ENCODE measurements at regions of chr1 and their contacts with region 1.

Region 1: GRCh38 chr1:204128964-204129896 is 22.6 kb downstream of the ETNK2 start:
- DNase-seq: peak; percentile 76
- ATAC-seq: peak; percentile 83
- H3K4me3 ChIP-seq: no peak overlapping the region
- H3K4me3 Mint-ChIP-seq: peak overlapping the region; percentile 34
- H3K27ac ChIP-seq: no peak overlapping the region
- H3K27ac Mint-ChIP-seq: no peak overlapping the region
- H3K4me1 ChIP-seq: peaks cover 7 to 8% of the 10 kb centered on the region in 2 donors
- H3K4me1 Mint-ChIP-seq: peaks cover 5% of the 10 kb centered on the region
- H3K27me3 ChIP-seq: peaks cover 0 to 12% (median 2%) of the 10 kb centered on the region in 4 experiments
- H3K27me3 Mint-ChIP-seq: peaks cover 14% of the 10 kb centered on the region
- CTCF ChIP-seq: peak; percentile 87

Region 2: DNA sequence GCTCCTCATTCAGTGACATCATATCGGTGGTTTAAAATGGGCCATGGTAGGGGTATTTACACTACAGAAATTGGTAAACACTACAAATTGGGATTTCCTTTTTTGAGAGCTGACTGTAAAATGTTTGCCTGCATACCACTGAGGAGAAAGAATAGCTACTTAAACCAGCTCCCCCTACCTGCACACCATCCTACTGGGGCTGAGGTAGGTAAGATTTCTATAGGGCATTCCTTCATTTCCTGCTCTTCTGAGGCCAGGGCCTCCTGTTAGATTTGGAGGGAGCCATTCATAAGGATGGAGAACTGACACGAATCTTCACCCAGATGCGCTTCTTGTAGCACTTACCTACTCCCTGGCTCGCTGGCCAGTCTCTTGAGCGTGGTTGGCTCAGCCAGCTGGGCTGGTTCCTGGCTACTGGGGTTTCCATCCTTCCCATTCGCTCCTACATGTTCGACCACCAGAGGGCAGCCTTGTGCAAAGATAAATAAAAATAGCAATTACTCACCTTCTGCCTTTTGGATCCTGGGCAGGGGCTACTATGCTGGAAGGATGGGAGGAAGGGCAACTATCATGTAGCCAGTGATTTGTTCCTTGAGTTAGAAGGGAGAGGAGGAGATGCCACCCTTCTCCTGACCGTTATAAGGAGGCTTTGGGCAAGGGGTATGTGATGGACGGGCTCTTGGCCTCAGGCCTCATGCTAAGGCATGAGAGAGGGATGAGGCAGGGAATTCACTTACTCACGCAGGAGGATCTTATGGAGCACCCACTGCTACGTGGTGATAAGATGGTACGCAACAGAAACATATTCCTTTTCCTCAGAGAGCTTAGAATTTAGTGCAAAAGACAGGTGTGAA is 624.6 kb before region 1 on chr1:
- CTCF ChIA-PET with region 1: interaction called, 5 read pairs
- POLR2A ChIA-PET with region 1: no interaction called
- intact Hi-C with region 1: loop called (anchors 5 kb)
- DNase-seq: peak; percentile 80
- ATAC-seq: peak; percentile 72
- H3K4me3 ChIP-seq: no peak overlapping the region
- H3K4me3 Mint-ChIP-seq: no peak overlapping the region
- H3K27ac ChIP-seq: no peak overlapping the region
- H3K27ac Mint-ChIP-seq: no peak overlapping the region
- H3K4me1 ChIP-seq: no peaks in the 10 kb centered on the region
- H3K4me1 Mint-ChIP-seq: peaks cover 2% of the 10 kb centered on the region
- H3K27me3 ChIP-seq: peaks cover 0 to 7% (median 0%) of the 10 kb centered on the region in 4 experiments
- H3K27me3 Mint-ChIP-seq: peaks cover 16% of the 10 kb centered on the region
- CTCF ChIP-seq: peak; percentile 93

Region 3: GRCh38 chr1:203871107-203871875 is 257.9 kb before region 1 on chr1:
- CTCF ChIA-PET with region 1: interaction called, 21 read pairs
- POLR2A ChIA-PET with region 1: no interaction called
- intact Hi-C with region 1: no loop called
- DNase-seq: peak; percentile 37
- ATAC-seq: no peak
- H3K4me3 ChIP-seq: no peak overlapping the region
- H3K4me3 Mint-ChIP-seq: no peak overlapping the region
- H3K27ac ChIP-seq: no peak overlapping the region
- H3K27ac Mint-ChIP-seq: no peak overlapping the region
- H3K4me1 ChIP-seq: no peaks in the 10 kb centered on the region
- H3K4me1 Mint-ChIP-seq: no peaks in the 10 kb centered on the region
- H3K27me3 ChIP-seq: no peaks in the 10 kb centered on the region
- H3K27me3 Mint-ChIP-seq: no peaks in the 10 kb centered on the region
- CTCF ChIP-seq: peak; percentile 61

Region 4: GRCh38 chr1:204018463-204018862 is 110.8 kb before region 1 on chr1:
- CTCF ChIA-PET with region 1: no interaction called
- POLR2A ChIA-PET with region 1: no interaction called
- intact Hi-C with region 1: no loop called
- DNase-seq: no peak
- ATAC-seq: no peak
- H3K4me3 ChIP-seq: no peak overlapping the region
- H3K4me3 Mint-ChIP-seq: no peak overlapping the region
- H3K27ac ChIP-seq: no peak overlapping the region
- H3K27ac Mint-ChIP-seq: no peak overlapping the region
- H3K4me1 ChIP-seq: no peaks in the 10 kb centered on the region
- H3K4me1 Mint-ChIP-seq: no peaks in the 10 kb centered on the region
- H3K27me3 ChIP-seq: peaks cover 0 to under 1% (median 0%) of the 10 kb centered on the region in 4 experiments
- H3K27me3 Mint-ChIP-seq: peaks cover 19% of the 10 kb centered on the region
- CTCF ChIP-seq: no peak

Region 5: DNA sequence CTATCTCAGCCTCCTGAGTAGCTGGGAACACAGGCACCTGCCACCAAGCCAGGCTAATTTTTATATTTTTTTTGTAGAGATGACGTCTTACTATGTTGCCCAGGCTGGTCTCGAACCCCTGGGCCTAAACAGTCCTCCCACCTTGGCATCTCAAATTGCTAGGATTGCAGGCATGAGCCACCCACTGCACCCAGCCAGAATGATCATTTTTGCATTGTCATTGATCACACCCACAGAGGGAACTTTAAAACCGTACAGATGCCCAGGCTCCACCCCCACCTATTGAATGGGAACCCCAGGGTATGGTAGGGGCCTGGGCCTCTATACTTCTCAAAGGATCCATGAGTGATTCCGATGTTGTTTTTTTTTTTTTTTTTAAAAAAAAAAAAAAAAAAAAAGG is 14.1 kb before region 1 on chr1:
- CTCF ChIA-PET with region 1: interaction called, 7 read pairs
- POLR2A ChIA-PET with region 1: interaction called, 12 read pairs
- intact Hi-C with region 1: no loop called
- DNase-seq: no peak
- ATAC-seq: no peak
- H3K4me3 ChIP-seq: no peak overlapping the region
- H3K4me3 Mint-ChIP-seq: no peak overlapping the region
- H3K27ac ChIP-seq: no peak overlapping the region
- H3K27ac Mint-ChIP-seq: no peak overlapping the region
- H3K4me1 ChIP-seq: no peaks in the 10 kb centered on the region
- H3K4me1 Mint-ChIP-seq: peaks cover 3% of the 10 kb centered on the region
- H3K27me3 ChIP-seq: no peaks in the 10 kb centered on the region
- H3K27me3 Mint-ChIP-seq: peaks cover 4% of the 10 kb centered on the region
- CTCF ChIP-seq: no peak